Heart left ventricle (tissue), 16 donors: ENCODE measurements at regions of chr11 and their contacts with region 1.

Region 1: GRCh38 chr11:64652586-64653387 is 61.8 kb downstream of the SLC22A12 start:
- DNase-seq: peak; percentile 70 to 82 (median 75)
- ATAC-seq: peak in 3 of 4 donors; percentile 73 to 86 (median 83)
- H3K4me3 ChIP-seq: no peak overlapping the region
- H3K27ac ChIP-seq: no peak overlapping the region
- H3K4me1 ChIP-seq: peaks cover 0 to 39% (median 0%) of the 10 kb centered on the region in 12 donors
- H3K27me3 ChIP-seq: peaks cover 0 to 5% (median 0%) of the 10 kb centered on the region in 9 donors
- CTCF ChIP-seq: peak; percentile 74 to 93 (median 85)
- POLR2A ChIP-seq: no peak

Region 2: DNA sequence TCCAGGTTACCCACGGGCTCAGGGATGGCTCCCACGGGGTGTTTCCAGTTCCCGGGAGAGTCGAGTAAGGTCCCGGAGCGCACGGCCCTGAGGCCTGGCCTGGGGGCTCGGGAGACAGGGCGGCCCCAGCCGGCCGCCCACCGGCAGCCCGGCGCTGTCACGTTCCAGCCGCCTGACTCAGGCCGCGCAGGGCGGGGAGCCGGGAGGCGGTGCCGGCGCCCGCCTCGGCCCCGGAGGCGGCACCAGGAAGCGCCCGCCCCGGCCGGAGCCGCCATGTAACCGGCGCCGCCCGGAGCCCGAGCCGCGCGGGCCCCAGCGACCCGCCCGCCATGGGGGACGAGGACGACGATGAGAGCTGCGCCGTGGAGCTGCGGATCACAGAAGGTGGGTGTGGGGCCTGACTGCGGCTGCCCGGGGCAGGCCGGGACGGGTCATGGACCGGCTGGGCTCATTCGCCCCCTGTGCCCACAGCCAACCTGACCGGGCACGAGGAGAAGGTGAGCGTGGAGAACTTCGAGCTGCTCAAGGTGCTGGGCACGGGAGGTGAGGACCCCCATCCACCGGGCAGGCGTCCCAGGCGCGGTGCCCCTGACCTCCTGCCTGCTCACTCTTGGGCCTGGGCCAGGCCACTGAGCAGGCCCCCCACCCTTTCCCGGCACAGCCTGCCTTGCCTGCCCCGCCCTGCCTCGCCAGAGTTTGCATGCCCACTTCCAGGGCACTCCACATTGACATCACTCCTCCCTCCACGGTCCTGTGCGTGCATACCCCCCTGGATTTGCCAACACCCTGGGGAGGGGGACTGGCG is 293.7 kb before region 1 on chr11 and contains the start of gene RPS6KA4:
- intact Hi-C with region 1: loop called in 1 of 10 experiments (anchors 10 kb)
- DNase-seq: peak; percentile 73 to 85 (median 74)
- ATAC-seq: peak; percentile 33 to 84 (median 78)
- H3K4me3 ChIP-seq: peak within 1 kb of the TSS; percentile 68 to 94 (median 84)
- H3K27ac ChIP-seq: peak within 1 kb of the TSS; percentile 78 to 95 (median 92)
- H3K4me1 ChIP-seq: peaks cover 3 to 47% (median 30%) of the 10 kb centered on the region in 12 donors
- H3K27me3 ChIP-seq: no peaks in the 10 kb centered on the region
- CTCF ChIP-seq: peak in 1 of 12 donors; percentile 19
- POLR2A ChIP-seq: peak in 1 of 2 donors; percentile 72
- total RNA-seq, gene RPS6KA4: 12.8 to 32.5 (median 18.3) TPM

Region 3: GRCh38 chr11:64386306-64386702 is 266.5 kb before region 1 on chr11:
- intact Hi-C with region 1: loop called in 1 of 10 experiments (anchors 5 kb)
- DNase-seq: no peak
- ATAC-seq: no peak
- H3K4me3 ChIP-seq: no peak overlapping the region
- H3K27ac ChIP-seq: no peak overlapping the region
- H3K4me1 ChIP-seq: peaks cover 0 to 22% (median 6%) of the 10 kb centered on the region in 12 donors
- H3K27me3 ChIP-seq: no peaks in the 10 kb centered on the region
- CTCF ChIP-seq: no peak
- POLR2A ChIP-seq: no peak

Region 4: DNA sequence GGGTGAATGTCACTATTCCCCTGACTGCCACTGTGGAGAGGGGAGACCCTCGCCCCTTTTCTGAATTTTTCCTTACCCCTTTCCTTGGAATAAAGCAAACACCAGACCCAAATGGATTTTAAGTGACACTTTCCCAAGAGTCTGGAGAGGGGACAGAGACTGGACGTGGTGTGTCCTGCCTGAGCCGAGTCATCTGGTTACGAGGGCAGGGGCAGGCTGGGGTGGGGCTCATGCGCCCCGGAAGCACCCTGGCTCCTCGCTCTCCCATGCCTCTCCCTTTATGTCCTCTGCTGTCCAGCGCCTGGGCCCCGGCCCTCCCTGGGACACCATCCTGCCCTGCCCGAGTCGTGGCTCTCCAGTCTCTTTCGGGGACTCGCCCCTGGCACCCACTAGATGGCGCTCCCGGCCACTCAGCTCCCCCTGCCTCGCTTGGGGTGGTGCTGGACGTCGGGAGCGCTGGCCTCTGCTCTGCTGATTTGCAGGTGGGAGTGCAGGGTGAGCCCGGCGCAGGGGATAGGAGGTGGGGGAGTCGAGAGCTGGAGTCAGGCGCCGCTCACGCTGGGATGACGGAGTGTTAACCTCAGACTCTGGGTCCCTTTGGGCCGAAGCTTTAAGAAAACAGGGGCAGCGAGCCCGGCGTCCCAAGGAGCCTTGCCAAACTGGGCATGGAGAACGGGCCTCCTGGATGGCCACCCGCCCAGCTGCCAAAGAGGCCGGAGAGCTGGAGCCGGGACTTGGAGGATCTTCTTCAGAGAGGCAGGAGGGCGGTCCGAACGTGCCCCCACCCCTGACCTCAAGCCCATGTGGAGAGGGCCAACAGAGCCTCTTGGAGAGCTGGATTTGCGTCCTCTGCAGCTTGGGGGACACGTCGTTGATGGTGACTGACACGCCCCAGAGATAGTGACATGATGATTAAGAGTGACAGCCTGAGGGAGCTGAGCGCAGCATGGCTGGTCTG is 203.9 kb before region 1 on chr11:
- intact Hi-C with region 1: loop called (anchors 2 to 5 kb)
- DNase-seq: peak; percentile 79 to 93 (median 83)
- ATAC-seq: peak; percentile 87 to 98 (median 96)
- H3K4me3 ChIP-seq: peak overlapping the region in 10 of 12 donors; percentile 10 to 51 (median 36)
- H3K27ac ChIP-seq: peak overlapping the region in 6 of 12 donors; percentile 12 to 92 (median 27)
- H3K4me1 ChIP-seq: peaks cover 0 to 29% (median 14%) of the 10 kb centered on the region in 12 donors
- H3K27me3 ChIP-seq: peaks cover 0 to 21% (median 0%) of the 10 kb centered on the region in 9 donors
- CTCF ChIP-seq: peak; percentile 76 to 91 (median 84)
- POLR2A ChIP-seq: no peak

Region 5: GRCh38 chr11:64489831-64490441 is 162.9 kb before region 1 on chr11:
- intact Hi-C with region 1: loop called in 1 of 10 experiments (anchors 5 kb)
- DNase-seq: peak in 4 of 5 donors; percentile 26 to 74 (median 49)
- ATAC-seq: peak in 2 of 4 donors; percentile 67 to 71
- H3K4me3 ChIP-seq: no peak overlapping the region
- H3K27ac ChIP-seq: no peak overlapping the region
- H3K4me1 ChIP-seq: peaks cover 0 to 10% (median 0%) of the 10 kb centered on the region in 12 donors
- H3K27me3 ChIP-seq: peaks cover 0 to 61% (median 26%) of the 10 kb centered on the region in 9 donors
- CTCF ChIP-seq: peak; percentile 29 to 76 (median 48)
- POLR2A ChIP-seq: no peak

Region 6: DNA sequence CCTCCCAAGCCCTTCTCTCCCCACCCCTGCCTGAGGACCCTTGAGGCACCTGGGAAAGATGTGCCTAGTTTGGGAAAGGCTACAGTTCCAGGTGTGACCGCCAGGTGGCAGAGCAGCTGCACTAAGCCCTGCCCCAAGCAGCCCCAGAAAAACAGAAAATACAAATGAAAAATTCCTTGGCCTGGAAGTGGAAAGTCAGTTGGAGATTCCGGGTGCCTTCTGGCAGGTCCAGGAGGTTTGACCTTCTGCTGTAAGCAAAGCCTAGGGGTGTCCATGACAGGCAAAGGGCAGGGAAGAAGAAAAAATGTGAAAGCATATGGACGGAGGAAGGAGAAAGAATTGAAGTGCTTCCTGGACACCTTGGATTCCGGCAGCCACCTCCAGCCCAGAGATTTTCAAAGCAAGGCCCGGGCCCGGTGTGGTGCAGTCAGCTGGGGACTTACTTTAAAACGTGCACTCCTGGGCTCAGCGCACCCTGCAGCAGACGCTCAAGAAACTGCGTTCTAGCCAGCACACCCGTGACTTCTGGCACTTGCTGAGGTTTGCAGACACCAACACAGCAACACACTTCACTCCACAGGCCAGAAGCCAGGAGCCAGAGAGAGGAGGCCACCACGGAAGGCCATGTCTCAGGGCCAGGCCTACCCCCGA is 99.1 kb before region 1 on chr11:
- intact Hi-C with region 1: loop called in 4 of 10 experiments (anchors 1 kb)
- DNase-seq: peak in 4 of 5 donors; percentile 47 to 71 (median 52)
- ATAC-seq: peak; percentile 57 to 65 (median 63)
- H3K4me3 ChIP-seq: no peak overlapping the region
- H3K27ac ChIP-seq: peak overlapping the region; percentile 5 to 80 (median 70)
- H3K4me1 ChIP-seq: peaks cover 0 to 27% (median 18%) of the 10 kb centered on the region in 12 donors
- H3K27me3 ChIP-seq: peaks cover 0 to 3% (median 0%) of the 10 kb centered on the region in 9 donors
- CTCF ChIP-seq: peak; percentile 84 to 98 (median 98)
- POLR2A ChIP-seq: no peak

Region 7: GRCh38 chr11:64713031-64713780 is 60.4 kb after region 1 on chr11:
- intact Hi-C with region 1: no loop called
- DNase-seq: peak in 1 of 5 donors; percentile 62
- ATAC-seq: peak in 2 of 4 donors; percentile 33 to 66
- H3K4me3 ChIP-seq: peak overlapping the region in 2 of 12 donors; percentile 17 to 34
- H3K27ac ChIP-seq: no peak overlapping the region
- H3K4me1 ChIP-seq: peaks cover 0 to 22% (median 0%) of the 10 kb centered on the region in 12 donors
- H3K27me3 ChIP-seq: peaks cover 46 to 98% (median 89%) of the 10 kb centered on the region in 9 donors
- CTCF ChIP-seq: no peak
- POLR2A ChIP-seq: no peak